HEK293 (cell line): ENCODE measurements at regions of chr19 and their contacts with region 1.

Region 1: GRCh38 chr19:42606660-42607351 is 12.1 kb upstream of the CEACAM8 start:
- H3K4me3 ChIP-seq: no peak overlapping the region
- H3K27ac ChIP-seq: no peak overlapping the region
- H3K4me1 ChIP-seq: no peaks in the 10 kb centered on the region
- CTCF ChIP-seq: peak; percentile 91

Region 2: DNA sequence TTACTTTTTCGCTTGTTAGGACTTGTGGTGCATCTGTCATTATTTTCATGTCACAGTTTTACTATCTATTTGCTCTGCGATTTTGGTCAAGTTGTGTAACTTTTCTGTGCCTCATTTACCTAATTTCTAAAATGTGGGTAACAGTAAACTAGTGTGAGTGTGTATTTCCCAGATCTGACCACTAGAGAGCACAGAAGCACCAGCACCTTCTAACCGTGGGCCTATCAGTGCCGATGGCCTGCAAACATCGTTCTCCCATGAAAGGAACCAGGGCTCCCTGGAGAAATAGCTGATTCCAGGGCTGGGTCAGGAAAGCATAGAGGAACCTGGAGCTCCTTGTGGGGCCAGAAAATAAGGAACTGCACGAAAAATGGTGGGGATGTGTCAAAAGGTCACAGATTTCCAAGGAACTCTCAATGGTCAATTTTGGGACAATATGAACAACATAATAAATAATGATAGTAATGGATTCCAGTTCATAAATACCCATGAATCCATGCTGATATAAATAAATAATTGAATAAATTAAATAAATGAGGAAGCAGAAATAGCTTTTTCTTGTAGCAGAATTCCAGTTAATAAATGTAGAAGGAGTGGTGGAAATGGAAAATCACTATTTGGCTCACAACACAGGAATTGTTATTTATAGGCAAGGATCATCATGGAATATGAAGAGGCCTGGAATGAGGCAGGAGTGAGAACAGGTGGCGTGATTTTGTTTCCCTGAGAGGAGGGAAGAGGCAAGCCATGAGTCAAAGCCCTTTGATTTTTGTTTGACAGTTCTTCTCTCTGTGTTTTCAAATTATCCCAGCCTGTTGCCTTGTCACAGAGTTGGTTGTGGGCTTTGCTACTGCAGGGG is 43.2 kb before region 1 on chr19:
- CTCF ChIA-PET with region 1: interaction called, 11 read pairs
- POLR2A ChIA-PET with region 1: no interaction called
- H3K4me3 ChIP-seq: no peak overlapping the region
- H3K27ac ChIP-seq: no peak overlapping the region
- H3K4me1 ChIP-seq: no peaks in the 10 kb centered on the region
- CTCF ChIP-seq: peak; percentile 69; the same call in 1 of the 2 replicates

Region 3: GRCh38 chr19:42619271-42619670 is 12.5 kb after region 1 on chr19:
- CTCF ChIA-PET with region 1: interaction called, 35 read pairs
- POLR2A ChIA-PET with region 1: no interaction called
- H3K4me3 ChIP-seq: no peak overlapping the region
- H3K27ac ChIP-seq: no peak overlapping the region
- H3K4me1 ChIP-seq: no peaks in the 10 kb centered on the region
- CTCF ChIP-seq: no peak

Region 4: GRCh38 chr19:42628411-42629140 is 21.8 kb after region 1 on chr19:
- CTCF ChIA-PET with region 1: interaction called, 15 read pairs
- POLR2A ChIA-PET with region 1: no interaction called
- H3K4me3 ChIP-seq: no peak overlapping the region
- H3K27ac ChIP-seq: no peak overlapping the region
- H3K4me1 ChIP-seq: no peaks in the 10 kb centered on the region; the same call in 1 of the 2 replicates
- CTCF ChIP-seq: no peak

Region 5: DNA sequence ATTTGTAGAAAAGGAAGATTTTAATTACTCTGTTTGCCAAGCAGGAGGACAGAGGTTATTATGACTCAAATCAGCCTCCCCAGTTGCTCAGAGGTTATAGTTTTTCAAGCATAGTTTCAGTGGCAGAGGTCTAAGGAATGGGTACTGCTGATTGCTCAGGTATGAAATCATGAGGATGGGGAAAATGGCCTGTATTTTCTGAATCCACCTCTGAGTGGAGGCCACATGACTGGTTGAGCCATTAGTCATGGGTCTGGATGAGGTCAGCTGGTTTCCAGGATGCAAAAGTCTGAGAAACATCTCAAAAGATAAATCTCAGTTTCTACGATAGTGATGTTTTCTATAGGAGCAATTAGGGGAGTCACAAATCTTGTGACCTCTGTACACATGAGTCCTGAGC is 50.8 kb after region 1 on chr19:
- CTCF ChIA-PET with region 1: interaction called, 18 read pairs
- POLR2A ChIA-PET with region 1: no interaction called
- H3K4me3 ChIP-seq: no peak overlapping the region
- H3K27ac ChIP-seq: no peak overlapping the region
- H3K4me1 ChIP-seq: no peaks in the 10 kb centered on the region
- CTCF ChIP-seq: no peak